Naive thymus-derived CD4-positive, alpha-beta T cell (primary cell): ENCODE measurements at regions of chr19 and their contacts with region 1.

Region 1: DNA sequence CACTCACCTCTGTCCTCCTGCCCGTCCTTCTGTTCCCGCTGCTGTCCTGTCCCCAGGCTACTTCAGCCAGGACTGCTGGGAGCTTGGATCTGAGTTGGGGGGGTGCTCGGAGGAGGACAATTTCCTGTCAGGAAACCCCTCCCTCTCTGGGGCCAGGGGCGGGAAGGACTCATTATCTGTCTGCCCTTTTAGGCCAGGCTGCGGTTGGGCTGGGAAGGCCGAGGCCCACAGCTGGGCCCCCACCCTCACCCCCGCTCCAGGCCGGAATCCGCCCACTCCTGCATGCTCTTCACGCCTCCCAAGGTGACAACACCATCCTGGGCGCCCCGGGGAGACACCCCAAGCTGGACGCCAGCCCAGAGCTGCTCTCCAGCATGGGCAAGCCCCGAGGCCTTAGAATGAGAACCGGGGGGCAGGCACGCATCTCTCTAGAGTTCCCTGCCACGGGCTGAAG is at the start of gene EXOC3L2:
- DNase-seq: no peak
- ATAC-seq: no peak
- H3K4me3 ChIP-seq: no peak within 1 kb of the TSS
- H3K4me3 Mint-ChIP-seq: peak within 1 kb of the TSS in 1 of 10 donors; percentile 61
- H3K27ac ChIP-seq: no peak within 1 kb of the TSS
- H3K27ac Mint-ChIP-seq: no peak within 1 kb of the TSS
- H3K4me1 ChIP-seq: peaks cover 0 to 2% of the 10 kb centered on the region in 2 donors
- H3K4me1 Mint-ChIP-seq: peaks cover 0 to 12% (median 4%) of the 10 kb centered on the region in 7 donors
- H3K27me3 ChIP-seq: no peaks in the 10 kb centered on the region
- H3K27me3 Mint-ChIP-seq: peaks cover 4 to 15% (median 8%) of the 10 kb centered on the region in 5 donors
- total RNA-seq, gene EXOC3L2: not detected

Region 2: DNA sequence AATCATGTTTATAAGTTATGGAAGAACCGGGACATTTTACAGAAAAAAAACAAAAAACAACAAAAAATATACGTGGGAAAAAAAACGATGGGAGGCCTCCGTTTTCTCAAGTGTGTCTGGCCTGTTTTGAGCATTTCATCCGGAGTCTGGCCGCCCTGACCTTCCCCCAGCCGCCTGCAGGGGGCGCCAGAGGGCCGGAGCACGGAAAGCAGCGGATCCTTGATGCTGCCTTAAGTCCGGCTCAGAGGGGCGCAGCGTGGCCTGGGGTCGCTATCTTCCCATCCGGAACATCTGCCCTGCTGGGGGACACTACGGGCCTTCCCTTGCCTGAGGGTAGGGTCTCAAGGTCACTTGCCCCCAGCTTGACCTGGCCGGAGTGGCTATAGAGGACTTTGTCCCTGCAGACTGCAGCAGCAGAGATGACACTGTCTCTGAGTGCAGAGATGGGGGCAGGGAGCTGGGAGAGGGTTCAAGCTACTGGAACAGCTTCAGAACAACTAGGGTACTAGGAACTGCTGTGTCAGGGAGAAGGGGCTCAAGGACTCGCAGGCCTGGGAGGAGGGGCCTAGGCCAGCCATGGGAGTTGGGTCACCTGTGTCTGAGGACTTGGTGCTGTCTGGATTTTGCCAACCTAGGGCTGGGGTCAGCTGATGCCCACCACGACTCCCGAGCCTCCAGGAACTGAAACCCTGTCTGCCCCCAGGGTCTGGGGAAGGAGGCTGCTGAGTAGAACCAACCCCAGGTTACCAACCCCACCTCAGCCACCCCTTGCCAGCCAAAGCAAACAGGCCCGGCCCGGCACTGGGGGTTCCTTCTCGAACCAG is 341.5 kb before region 1 on chr19:
- CTCF ChIA-PET with region 1: no interaction called
- POLR2A ChIA-PET with region 1: no interaction called
- intact Hi-C with region 1: loop called in 1 of 2 experiments (anchors 5 kb)
- DNase-seq: peak; percentile 49 to 86 (median 70)
- ATAC-seq: peak; percentile 81
- H3K4me3 ChIP-seq: no peak overlapping the region
- H3K4me3 Mint-ChIP-seq: no peak overlapping the region
- H3K27ac ChIP-seq: no peak overlapping the region
- H3K27ac Mint-ChIP-seq: peak overlapping the region in 2 of 9 donors; percentile 19 to 49
- H3K4me1 ChIP-seq: no peaks in the 10 kb centered on the region
- H3K4me1 Mint-ChIP-seq: peaks cover 5 to 13% (median 10%) of the 10 kb centered on the region in 7 donors
- H3K27me3 ChIP-seq: peaks cover 0 to 4% of the 10 kb centered on the region in 2 donors
- H3K27me3 Mint-ChIP-seq: peaks cover 18 to 22% (median 20%) of the 10 kb centered on the region in 5 donors

Region 3: DNA sequence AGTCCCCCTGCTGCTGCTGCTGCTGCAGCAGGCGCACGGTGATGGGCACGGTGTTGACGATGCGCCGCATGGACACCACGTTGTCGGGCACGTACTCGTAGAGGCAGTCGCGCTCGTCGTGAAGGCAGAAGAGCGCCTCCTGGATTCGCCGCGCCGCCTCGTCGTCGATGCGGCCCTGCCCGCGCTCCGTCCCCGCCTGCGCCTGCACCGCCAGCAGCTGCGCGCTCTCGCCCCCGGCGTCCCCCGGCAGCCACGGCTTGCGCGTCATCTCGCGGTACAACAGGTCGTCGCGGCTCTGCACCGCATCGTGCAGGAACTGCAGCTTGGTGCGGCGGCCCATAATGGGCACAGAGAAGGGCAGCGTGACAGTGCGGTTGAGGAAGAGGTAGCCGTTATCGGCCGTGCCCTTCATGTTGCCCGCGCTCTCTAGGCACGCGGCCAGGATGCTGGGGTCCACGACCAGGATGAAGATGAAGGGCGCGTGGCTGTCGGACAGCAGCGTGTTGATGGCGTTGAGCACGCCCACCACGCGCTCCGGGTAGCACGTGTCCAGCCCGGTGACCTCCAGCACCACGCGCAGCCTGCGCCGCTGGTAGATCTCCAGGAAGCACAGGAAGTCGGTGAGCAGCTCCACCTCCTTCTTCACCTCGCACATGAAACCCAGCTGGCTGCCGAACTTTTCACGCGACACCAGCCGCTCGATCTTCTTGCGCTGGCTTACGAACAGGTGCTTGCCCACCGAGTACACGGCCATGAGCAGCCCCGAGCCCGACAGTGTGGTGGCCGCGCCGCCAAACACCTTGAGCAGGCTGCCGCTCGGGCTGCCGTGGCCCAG is 92.6 kb before region 1 on chr19:
- CTCF ChIA-PET with region 1: no interaction called
- POLR2A ChIA-PET with region 1: no interaction called
- intact Hi-C with region 1: no loop called
- DNase-seq: peak; percentile 26 to 63 (median 50)
- ATAC-seq: peak; percentile 70
- H3K4me3 ChIP-seq: peak overlapping the region; percentile 51
- H3K4me3 Mint-ChIP-seq: peak overlapping the region; percentile 76 to 90 (median 82)
- H3K27ac ChIP-seq: no peak overlapping the region
- H3K27ac Mint-ChIP-seq: peak overlapping the region in 7 of 9 donors; percentile 14 to 78 (median 57)
- H3K4me1 ChIP-seq: peaks cover 7 to 21% of the 10 kb centered on the region in 2 donors
- H3K4me1 Mint-ChIP-seq: peaks cover 9 to 28% (median 22%) of the 10 kb centered on the region in 7 donors
- H3K27me3 ChIP-seq: no peaks in the 10 kb centered on the region
- H3K27me3 Mint-ChIP-seq: peaks cover 6 to 30% (median 10%) of the 10 kb centered on the region in 5 donors